Naive thymus-derived CD8-positive, alpha-beta T cell (primary cell): ENCODE measurements at regions of chr1 and their contacts with region 1.

Region 1: GRCh38 chr1:235971571-235972310 is 93.1 kb downstream of the NID1 start:
- DNase-seq: peak; percentile 68 to 94 (median 86)
- ATAC-seq: peak; percentile 99
- H3K4me3 Mint-ChIP-seq: peak overlapping the region; percentile 72 to 88 (median 80)
- H3K27ac Mint-ChIP-seq: peak overlapping the region; percentile 88 to 100 (median 96)
- H3K4me1 Mint-ChIP-seq: peaks cover 9 to 22% (median 16%) of the 10 kb centered on the region in 4 donors
- H3K27me3 Mint-ChIP-seq: no peaks in the 10 kb centered on the region

Region 2: GRCh38 chr1:235504496-235505222 is 467.1 kb before region 1 on chr1:
- POLR2A ChIA-PET with region 1: interaction called, 11 read pairs
- DNase-seq: peak; percentile 96 to 99 (median 98)
- ATAC-seq: peak; percentile 78 to 82
- H3K4me3 Mint-ChIP-seq: peak overlapping the region; percentile 93 to 99 (median 96)
- H3K27ac Mint-ChIP-seq: peak overlapping the region; percentile 93 to 98 (median 98)
- H3K4me1 Mint-ChIP-seq: peaks cover 14 to 28% (median 20%) of the 10 kb centered on the region in 4 donors
- H3K27me3 Mint-ChIP-seq: peaks cover 0 to 2% (median 0%) of the 10 kb centered on the region in 5 donors

Region 3: DNA sequence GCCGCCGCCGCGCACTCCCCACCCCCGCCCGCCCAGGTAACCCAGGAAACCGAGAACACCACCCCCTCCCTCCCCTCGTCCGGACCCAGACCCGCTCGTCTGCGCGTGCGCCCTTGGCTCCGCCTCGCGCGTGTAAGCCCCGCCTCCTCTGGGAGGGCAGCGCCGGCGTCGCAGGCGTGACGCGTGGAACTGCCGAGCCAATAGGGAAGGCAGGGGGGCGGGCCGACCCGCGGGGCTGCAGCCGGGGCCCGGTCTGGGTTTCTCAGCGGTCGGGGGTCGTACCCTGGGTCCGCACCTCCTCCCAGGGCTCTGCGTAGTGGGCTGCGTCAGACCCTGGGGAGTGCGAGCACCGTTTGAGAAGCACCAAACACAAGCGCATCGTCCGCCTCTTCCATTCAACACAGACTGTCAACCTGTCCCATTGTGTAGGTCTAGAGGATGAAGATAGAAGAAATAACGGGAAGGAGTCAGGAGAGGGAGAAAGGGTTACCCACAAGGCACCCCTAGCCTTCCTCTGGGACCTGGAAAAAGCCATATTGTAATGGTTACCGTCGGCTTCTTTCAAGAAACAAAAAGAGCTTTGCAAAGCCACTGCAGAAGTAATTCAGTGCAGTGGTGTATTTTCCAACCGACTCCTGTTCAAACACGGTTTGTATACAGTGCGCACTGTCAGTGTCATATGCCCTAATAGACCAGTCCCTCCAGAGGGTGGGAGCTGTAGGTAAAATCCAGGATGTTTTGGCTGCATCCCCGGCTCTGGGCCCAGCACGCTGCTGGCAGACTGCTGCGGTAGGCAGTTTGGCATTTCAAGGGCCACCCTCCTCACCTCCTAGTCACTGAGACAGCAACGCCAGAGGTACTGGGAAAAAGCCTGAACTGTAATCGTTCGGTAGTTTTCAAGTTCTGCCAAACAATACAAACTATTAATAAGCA is 104.6 kb before region 1 on chr1:
- POLR2A ChIA-PET with region 1: interaction called, 42 read pairs
- DNase-seq: peak; percentile 97 to 100 (median 98)
- ATAC-seq: peak; percentile 65 to 74
- H3K4me3 Mint-ChIP-seq: peak overlapping the region; percentile 89 to 99 (median 96)
- H3K27ac Mint-ChIP-seq: peak overlapping the region; percentile 94 to 100 (median 99)
- H3K4me1 Mint-ChIP-seq: peaks cover 21 to 65% (median 55%) of the 10 kb centered on the region in 4 donors
- H3K27me3 Mint-ChIP-seq: no peaks in the 10 kb centered on the region

Region 4: DNA sequence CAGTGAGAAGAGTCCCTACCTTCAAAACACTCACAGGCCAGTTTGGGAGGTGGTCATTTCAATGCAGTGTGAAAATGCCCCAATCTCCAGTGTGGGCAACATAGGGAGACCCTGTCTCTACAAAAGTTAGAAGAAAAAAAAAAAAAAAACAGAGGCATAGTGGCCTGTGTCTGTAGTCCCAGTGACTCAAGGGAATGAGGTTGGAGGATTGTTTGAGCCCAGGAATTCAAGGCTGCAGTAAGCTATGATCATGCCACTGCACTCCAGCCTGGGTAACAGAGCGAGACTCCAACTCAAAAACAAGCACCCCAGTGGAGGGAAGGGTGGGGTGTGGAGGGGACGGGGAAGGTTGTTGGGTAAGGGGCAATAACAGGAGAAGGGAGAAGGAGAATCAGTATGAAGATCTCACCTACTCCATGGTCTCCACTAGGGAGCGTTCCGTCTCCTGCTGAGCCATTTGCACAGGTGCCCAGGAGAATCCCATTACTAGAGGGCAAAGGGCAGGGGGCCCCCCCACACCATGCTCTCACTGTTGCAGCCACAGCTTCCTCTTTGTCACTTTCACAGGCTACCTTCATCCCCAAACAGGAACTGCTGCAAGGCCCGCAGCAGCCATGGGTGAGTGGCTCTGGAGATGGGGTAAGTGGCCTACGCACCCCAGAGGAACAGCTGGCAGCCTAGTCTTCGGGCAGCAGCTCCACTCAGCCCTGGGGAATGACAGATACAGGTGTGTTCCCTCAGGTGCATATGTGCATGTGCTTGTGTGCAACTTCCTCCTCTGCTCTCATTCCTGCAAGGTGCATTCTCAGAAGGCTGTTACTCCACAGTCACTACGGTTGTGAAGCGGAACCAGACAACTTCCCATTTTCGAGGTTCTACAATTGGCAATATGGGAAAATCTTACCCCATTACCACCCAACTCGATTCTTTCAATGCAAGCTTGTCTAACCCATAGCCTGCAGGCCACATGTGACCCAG is 17.1 kb before region 1 on chr1:
- POLR2A ChIA-PET with region 1: interaction called, 16 read pairs
- DNase-seq: peak in 8 of 10 donors; percentile 4 to 73 (median 45)
- ATAC-seq: peak; percentile 88 to 95
- H3K4me3 Mint-ChIP-seq: peak overlapping the region; percentile 45 to 70 (median 62)
- H3K27ac Mint-ChIP-seq: peak overlapping the region; percentile 68 to 92 (median 82)
- H3K4me1 Mint-ChIP-seq: peaks cover 22 to 64% (median 42%) of the 10 kb centered on the region in 4 donors
- H3K27me3 Mint-ChIP-seq: no peaks in the 10 kb centered on the region